ENCODE measurements at regions of chr10 and their contacts with region 1.

Region 1: GRCh38 chr10:12068449-12069269 is at the start of gene DHTKD1:
- DNase-seq: peak; percentile 100
- H3K4me3 Mint-ChIP-seq: peak within 1 kb of the TSS; percentile 83
- H3K27ac Mint-ChIP-seq: peak within 1 kb of the TSS; percentile 83
- H3K4me1 Mint-ChIP-seq: peaks cover 27% of the 10 kb centered on the region
- H3K27me3 Mint-ChIP-seq: no peaks in the 10 kb centered on the region
- total RNA-seq, gene DHTKD1: 19.9 and 22.6 TPM in 2 replicates

Region 2: GRCh38 chr10:12031404-12031803 is 37.3 kb before region 1 on chr10:
- intact Hi-C with region 1: loop called (anchors 5 kb)
- DNase-seq: no peak
- H3K4me3 Mint-ChIP-seq: no peak overlapping the region
- H3K27ac Mint-ChIP-seq: no peak overlapping the region
- H3K4me1 Mint-ChIP-seq: peaks cover 40% of the 10 kb centered on the region
- H3K27me3 Mint-ChIP-seq: no peaks in the 10 kb centered on the region

Region 3: GRCh38 chr10:12042797-12043651 is 25.6 kb before region 1 on chr10 and contains the start of gene UPF2:
- intact Hi-C with region 1: loop called (anchors 1 kb)
- DNase-seq: peak; percentile 94
- H3K4me3 Mint-ChIP-seq: peak within 1 kb of the TSS; percentile 99
- H3K27ac Mint-ChIP-seq: peak within 1 kb of the TSS; percentile 99
- H3K4me1 Mint-ChIP-seq: peaks cover 34% of the 10 kb centered on the region
- H3K27me3 Mint-ChIP-seq: no peaks in the 10 kb centered on the region
- total RNA-seq, gene UPF2: 38.9 and 43.6 TPM in 2 replicates

Region 4: GRCh38 chr10:12129222-12130111 is 60.8 kb after region 1 on chr10 and contains the start of gene SEC61A2:
- intact Hi-C with region 1: loop called (anchors 1 kb)
- DNase-seq: peak; percentile 99
- H3K4me3 Mint-ChIP-seq: peak within 1 kb of the TSS; percentile 94
- H3K27ac Mint-ChIP-seq: peak within 1 kb of the TSS; percentile 90
- H3K4me1 Mint-ChIP-seq: peaks cover 49% of the 10 kb centered on the region
- H3K27me3 Mint-ChIP-seq: no peaks in the 10 kb centered on the region
- total RNA-seq, gene SEC61A2: 21.9 and 22.1 TPM in 2 replicates